Activated T-helper 1 cell treated with anti-CD3 and anti-CD28 coated beads, Interleukin-12 subunit alpha, Interleukin-12 subunit beta, Interleukin-2, Interleukin-4 antibody, amounts not matched to agents 30 ng/mL and 10 ng/mL and 1 ng/mL, durations not matched to agents 14 hours and 24 hours and 36 hours (primary cell): ENCODE measurements at regions of chr6 and their contacts with region 1.

Region 1: GRCh38 chr6:168865-169455 is 123.3 kb upstream of the DUSP22 start:
- DNase-seq: no peak
- H3K4me3 Mint-ChIP-seq: no peak overlapping the region
- H3K27ac Mint-ChIP-seq: no peak overlapping the region
- H3K4me1 Mint-ChIP-seq: no peaks in the 10 kb centered on the region
- H3K27me3 Mint-ChIP-seq: peaks cover 17% of the 10 kb centered on the region

Region 2: GRCh38 chr6:152431-152830 is 16.5 kb before region 1 on chr6:
- intact Hi-C with region 1: loop called (anchors 1 kb)
- DNase-seq: no peak
- H3K4me3 Mint-ChIP-seq: no peak overlapping the region
- H3K27ac Mint-ChIP-seq: no peak overlapping the region
- H3K4me1 Mint-ChIP-seq: peaks cover 61% of the 10 kb centered on the region
- H3K27me3 Mint-ChIP-seq: peaks cover 13% of the 10 kb centered on the region

Region 3: DNA sequence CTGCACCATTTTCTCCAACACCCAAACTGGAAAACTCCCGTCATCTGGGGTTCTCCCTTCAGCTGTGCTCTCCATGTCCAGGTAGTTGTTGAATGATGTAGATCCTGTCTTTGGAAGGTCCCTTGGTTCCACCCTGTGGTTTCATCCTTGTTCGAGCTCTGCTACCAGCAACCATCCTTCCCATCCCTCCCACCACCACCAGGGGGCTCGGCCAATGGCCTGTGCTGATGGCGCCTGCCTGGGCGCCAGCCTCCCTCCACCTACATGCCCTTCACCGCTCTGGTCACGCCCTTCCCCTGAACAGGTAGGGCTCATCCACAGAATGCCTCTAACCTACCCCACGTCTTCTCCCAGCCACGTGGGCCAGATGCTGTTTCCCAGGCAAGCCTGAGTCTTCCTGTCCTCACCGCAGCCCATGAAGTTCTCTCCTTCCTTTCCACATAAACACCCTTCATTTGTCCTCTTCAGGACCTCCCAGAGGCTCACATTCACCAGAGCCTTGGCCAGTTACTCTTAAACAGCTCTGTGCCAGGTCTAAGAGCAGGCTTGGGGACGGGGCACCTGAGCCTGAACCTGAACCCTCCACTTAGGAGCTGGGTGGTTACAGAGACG is 48.2 kb after region 1 on chr6:
- intact Hi-C with region 1: no loop called
- DNase-seq: no peak
- H3K4me3 Mint-ChIP-seq: no peak overlapping the region
- H3K27ac Mint-ChIP-seq: no peak overlapping the region
- H3K4me1 Mint-ChIP-seq: peaks cover 53% of the 10 kb centered on the region
- H3K27me3 Mint-ChIP-seq: peaks cover 5% of the 10 kb centered on the region

Region 4: DNA sequence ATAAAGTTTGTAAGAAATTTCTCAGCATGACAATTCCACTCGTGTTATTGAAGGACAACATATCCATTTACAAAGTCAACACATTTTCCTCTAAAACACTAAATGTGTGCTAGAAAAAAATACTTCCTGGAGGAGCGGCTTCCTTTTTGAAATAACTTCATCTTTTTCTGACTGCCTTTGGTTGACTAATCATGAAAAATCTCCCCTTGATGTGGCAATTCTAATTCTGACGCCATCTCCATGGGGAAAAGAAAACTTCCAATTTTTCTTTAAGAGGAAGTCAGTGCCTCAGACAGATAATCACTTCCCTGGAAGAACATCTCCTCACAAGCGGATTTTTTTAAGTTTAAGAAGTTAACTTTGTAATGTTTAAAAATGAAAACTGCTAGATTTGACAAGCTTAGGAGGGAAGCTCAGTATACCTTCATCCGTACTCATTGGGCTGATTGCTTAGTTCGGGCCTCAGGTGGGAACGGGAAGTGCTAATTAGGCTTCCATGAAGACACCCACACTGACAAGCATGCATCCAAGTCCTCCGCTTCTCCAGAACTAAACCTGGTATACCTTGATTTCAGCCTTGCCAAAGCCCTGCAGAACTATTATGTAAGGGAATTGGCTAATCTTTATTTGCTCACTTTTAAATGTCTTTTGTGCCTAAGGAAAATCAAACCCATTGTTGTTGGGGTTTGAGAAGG is 88.2 kb after region 1 on chr6:
- intact Hi-C with region 1: no loop called
- DNase-seq: no peak
- H3K4me3 Mint-ChIP-seq: no peak overlapping the region
- H3K27ac Mint-ChIP-seq: no peak overlapping the region
- H3K4me1 Mint-ChIP-seq: peaks cover 53% of the 10 kb centered on the region
- H3K27me3 Mint-ChIP-seq: peaks cover 3% of the 10 kb centered on the region